CD4-positive, alpha-beta memory T cell (primary cell): ENCODE measurements at regions of chr10 and their contacts with region 1.

Region 1: GRCh38 chr10:63465293-63466143 is at the start of gene JMJD1C:
- DNase-seq: peak; percentile 63 to 70 (median 67)
- H3K4me3 ChIP-seq: peak within 1 kb of the TSS; percentile 58 to 71
- H3K4me3 Mint-ChIP-seq: peak within 1 kb of the TSS; percentile 94 to 98 (median 96)
- H3K27ac ChIP-seq: peak within 1 kb of the TSS; percentile 58
- H3K27ac Mint-ChIP-seq: peak within 1 kb of the TSS; percentile 85 to 94 (median 93)
- H3K4me1 ChIP-seq: peaks cover 16% of the 10 kb centered on the region
- H3K4me1 Mint-ChIP-seq: peaks cover 17 to 31% (median 19%) of the 10 kb centered on the region in 4 donors
- H3K27me3 ChIP-seq: no peaks in the 10 kb centered on the region
- H3K27me3 Mint-ChIP-seq: no peaks in the 10 kb centered on the region
- total RNA-seq, gene JMJD1C: 113 to 115 TPM

Region 2: GRCh38 chr10:62916141-62916603 is 549.3 kb before region 1 on chr10:
- CTCF ChIA-PET with region 1: no interaction called
- POLR2A ChIA-PET with region 1: no interaction called
- intact Hi-C with region 1: no loop called
- DNase-seq: no peak
- H3K4me3 ChIP-seq: no peak overlapping the region
- H3K4me3 Mint-ChIP-seq: no peak overlapping the region
- H3K27ac ChIP-seq: no peak overlapping the region
- H3K27ac Mint-ChIP-seq: no peak overlapping the region
- H3K4me1 ChIP-seq: no peaks in the 10 kb centered on the region
- H3K4me1 Mint-ChIP-seq: no peaks in the 10 kb centered on the region
- H3K27me3 ChIP-seq: no peaks in the 10 kb centered on the region
- H3K27me3 Mint-ChIP-seq: peaks cover 4 to 5% of the 10 kb centered on the region in 2 donors

Region 3: DNA sequence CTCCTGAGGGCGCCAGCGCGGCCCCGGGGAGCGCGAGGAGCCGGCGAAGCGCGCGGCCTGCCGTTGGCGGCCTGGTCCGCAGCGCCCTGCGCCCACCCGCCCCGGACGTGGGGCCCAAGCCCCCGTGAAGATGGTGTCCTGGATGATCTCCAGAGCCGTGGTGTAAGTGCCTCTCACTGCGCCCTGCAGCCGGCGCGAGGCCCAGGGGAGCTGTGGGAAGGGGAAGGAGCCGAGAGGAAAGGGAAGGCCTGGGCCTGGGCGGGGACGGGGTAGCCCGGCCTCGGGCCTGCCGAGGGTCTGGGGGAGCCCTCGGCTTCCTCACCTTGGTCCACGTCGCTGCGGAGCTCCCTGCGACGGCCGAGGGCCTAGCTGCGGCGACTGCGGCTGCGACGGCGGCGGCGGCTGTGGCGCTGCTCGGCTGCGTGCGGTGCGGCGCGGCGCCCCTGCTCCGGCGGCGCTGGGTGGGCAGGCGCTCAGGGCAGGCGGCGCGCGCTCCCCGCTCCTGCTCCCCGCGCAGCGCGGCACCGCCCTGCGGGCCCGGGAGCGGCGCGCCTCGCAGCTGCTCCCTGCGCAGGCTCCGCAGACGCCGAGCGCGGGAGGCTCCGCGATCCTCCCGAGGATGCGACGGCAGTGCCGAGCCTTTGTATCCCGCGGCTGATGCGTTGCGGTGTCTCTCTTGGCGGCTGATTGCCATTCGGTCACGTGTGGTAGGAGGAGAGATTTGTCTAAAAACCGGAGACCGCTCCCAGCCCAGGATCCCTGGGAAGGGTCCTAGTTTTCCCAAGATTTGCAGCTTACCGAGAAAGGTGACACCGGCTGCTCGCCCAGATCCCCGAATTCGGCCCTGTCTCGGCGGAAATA is 56.1 kb after region 1 on chr10:
- CTCF ChIA-PET with region 1: interaction called, 4 read pairs
- POLR2A ChIA-PET with region 1: interaction called, 24 read pairs
- intact Hi-C with region 1: loop called (anchors 2 kb)
- DNase-seq: peak; percentile 53 to 71 (median 59)
- H3K4me3 ChIP-seq: peak overlapping the region; percentile 79 to 92
- H3K4me3 Mint-ChIP-seq: peak overlapping the region; percentile 80 to 93 (median 86)
- H3K27ac ChIP-seq: peak overlapping the region; percentile 78
- H3K27ac Mint-ChIP-seq: peak overlapping the region; percentile 89 to 96 (median 94)
- H3K4me1 ChIP-seq: peaks cover 63% of the 10 kb centered on the region
- H3K4me1 Mint-ChIP-seq: peaks cover 47 to 79% (median 66%) of the 10 kb centered on the region in 4 donors
- H3K27me3 ChIP-seq: no peaks in the 10 kb centered on the region
- H3K27me3 Mint-ChIP-seq: no peaks in the 10 kb centered on the region